Pancreas (tissue), 10 donors: ENCODE measurements at regions of chr6 and their contacts with region 1.

Region 1: DNA sequence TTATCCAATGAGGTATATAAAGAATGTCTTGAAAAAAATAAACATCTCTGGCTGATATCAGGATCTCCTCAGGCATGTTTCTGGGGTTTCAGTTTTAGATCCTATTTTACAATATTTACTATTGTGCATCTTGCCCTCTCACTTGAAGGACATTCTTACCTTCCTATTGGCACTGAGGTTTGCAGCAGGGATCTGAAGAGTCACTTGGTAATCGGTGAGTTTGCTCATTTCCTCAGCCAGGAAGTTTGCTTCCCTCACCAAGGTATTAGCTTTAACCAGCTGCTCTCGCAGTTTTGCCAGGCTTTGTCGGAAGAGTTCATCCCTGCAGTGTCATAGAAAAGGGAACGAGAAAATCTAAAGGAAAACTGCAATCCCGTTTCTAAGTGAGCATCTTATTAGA is 101.9 kb upstream of the NUP153 start:
- DNase-seq: no peak
- ATAC-seq: no peak
- H3K4me3 ChIP-seq: no peak overlapping the region
- H3K27ac ChIP-seq: no peak overlapping the region
- H3K4me1 ChIP-seq: no peaks in the 10 kb centered on the region
- H3K27me3 ChIP-seq: no peaks in the 10 kb centered on the region
- CTCF ChIP-seq: no peak

Region 2: DNA sequence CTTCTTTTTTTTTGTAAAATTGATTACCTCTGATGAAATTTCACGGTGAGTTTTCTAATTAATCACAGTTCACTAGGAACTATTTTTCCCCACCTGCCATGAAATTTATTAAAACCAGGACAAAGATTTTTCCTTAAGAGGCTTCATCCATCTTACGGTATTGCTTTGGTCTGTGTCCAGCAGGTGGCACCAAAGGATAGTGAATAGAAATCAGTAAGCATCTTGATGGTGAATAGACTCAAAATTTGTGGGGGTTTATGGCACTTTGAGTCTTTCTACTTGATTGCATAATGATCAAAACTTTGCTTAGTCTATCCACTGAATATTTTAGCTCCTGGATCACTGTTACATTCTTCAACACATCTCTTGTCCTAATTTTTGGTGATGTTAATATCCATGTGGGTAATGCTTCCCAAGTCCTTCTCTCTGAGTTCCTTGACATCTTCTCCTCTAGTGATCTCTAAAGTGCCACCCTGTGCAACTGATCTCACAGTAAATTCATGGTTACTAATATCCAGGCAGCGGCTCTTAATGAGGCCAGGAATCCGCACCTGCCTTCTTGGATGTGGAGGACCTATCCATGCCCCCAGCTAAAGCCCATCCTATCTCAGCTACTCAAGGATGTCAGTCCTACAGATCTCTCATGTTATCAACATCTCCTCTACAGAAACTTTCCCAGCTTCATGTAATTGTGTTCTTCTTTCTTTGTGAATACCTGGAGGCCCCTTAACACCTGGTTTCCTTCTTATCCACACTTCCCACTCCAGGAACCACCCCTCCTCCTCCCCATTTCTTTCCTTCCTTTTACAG is 652.3 kb before region 1 on chr6:
- intact Hi-C with region 1: loop called in 2 of 3 experiments (anchors 10 kb)
- DNase-seq: peak in 5 of 6 donors; percentile 46 to 70 (median 50)
- ATAC-seq: peak; percentile 57 to 79 (median 74)
- H3K4me3 ChIP-seq: no peak overlapping the region
- H3K27ac ChIP-seq: no peak overlapping the region
- H3K4me1 ChIP-seq: no peaks in the 10 kb centered on the region
- H3K27me3 ChIP-seq: no peaks in the 10 kb centered on the region
- CTCF ChIP-seq: peak; percentile 44 to 67 (median 64)

Region 3: GRCh38 chr6:17365977-17366376 is 442.6 kb before region 1 on chr6:
- intact Hi-C with region 1: no loop called
- DNase-seq: no peak
- ATAC-seq: no peak
- H3K4me3 ChIP-seq: no peak overlapping the region
- H3K27ac ChIP-seq: no peak overlapping the region
- H3K4me1 ChIP-seq: no peaks in the 10 kb centered on the region
- H3K27me3 ChIP-seq: no peaks in the 10 kb centered on the region
- CTCF ChIP-seq: no peak

Region 4: GRCh38 chr6:17599885-17600526 is 208.6 kb before region 1 on chr6 and contains the start of gene FAM8A1:
- intact Hi-C with region 1: loop called in 1 of 3 experiments (anchors 10 kb)
- DNase-seq: peak; percentile 97 to 99 (median 98)
- ATAC-seq: peak; percentile 95 to 98 (median 97)
- H3K4me3 ChIP-seq: peak within 1 kb of the TSS; percentile 38 to 85 (median 76)
- H3K27ac ChIP-seq: peak within 1 kb of the TSS; percentile 92 to 99 (median 96)
- H3K4me1 ChIP-seq: peaks cover 0 to 16% (median 16%) of the 10 kb centered on the region in 3 donors
- H3K27me3 ChIP-seq: no peaks in the 10 kb centered on the region
- CTCF ChIP-seq: peak; percentile 28 to 58 (median 35)
- total RNA-seq, gene FAM8A1: 9.8 to 15.9 (median 12.0) TPM